ENCODE measurements at regions of chr3 and their contacts with region 1.

Region 1: GRCh38 chr3:46488735-46489361 is 8.9 kb upstream of the RTP3 start:
- DNase-seq: peak; percentile 92
- ATAC-seq: peak; percentile 91 to 96

Region 2: DNA sequence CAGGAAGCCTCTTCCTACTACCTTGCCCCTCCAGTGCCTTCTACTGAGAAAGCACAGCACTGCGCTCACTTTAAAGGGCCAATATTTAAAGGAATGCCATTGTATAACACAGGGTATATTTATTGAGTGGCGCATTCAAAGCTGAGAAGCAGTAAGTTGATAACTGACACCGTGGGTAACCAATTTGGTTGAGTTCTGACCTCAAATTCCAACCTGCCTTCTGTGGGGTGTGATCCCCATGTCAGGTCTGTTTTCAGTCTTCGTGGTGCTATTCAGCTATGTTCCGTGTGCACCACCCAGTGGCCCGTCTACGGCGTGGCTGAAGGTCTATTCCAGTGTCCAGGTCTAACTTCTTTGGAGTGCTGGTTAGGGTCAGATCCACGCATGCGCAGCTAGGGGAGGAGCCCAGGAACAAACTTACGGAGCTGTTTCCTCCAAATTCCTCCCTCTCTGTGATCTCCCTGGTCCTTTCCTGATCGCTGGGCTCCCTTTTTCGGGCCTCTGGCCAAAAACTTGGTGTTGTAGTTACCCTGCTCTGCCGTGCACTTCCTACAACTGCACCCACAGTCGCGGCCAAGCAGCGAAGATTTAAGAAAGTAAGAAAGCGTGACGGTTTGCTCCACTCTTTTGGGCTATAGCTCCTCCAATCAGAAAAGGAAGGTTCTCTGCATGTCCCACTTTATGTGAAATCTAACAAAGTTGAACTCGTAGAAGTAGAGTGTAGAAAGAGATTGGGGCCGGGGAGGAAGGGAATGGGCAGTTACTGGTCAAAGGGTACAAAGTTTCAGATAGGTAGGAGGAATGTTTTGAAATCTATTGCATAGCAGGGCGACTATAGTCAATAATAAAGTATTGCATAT is 69.6 kb after region 1 on chr3:
- intact Hi-C with region 1: loop called in 1 of 2 experiments (anchors 10 kb)
- DNase-seq: peak; percentile 91
- ATAC-seq: peak; percentile 94 to 95

Region 3: GRCh38 chr3:46629551-46630517 is 141.0 kb after region 1 on chr3:
- intact Hi-C with region 1: loop called (anchors 1 to 5 kb)
- DNase-seq: peak; percentile 87
- ATAC-seq: peak; percentile 88 to 95